Sigmoid colon (tissue), 7 donors: ENCODE measurements at regions of chr20 and their contacts with region 1.

Region 1: DNA sequence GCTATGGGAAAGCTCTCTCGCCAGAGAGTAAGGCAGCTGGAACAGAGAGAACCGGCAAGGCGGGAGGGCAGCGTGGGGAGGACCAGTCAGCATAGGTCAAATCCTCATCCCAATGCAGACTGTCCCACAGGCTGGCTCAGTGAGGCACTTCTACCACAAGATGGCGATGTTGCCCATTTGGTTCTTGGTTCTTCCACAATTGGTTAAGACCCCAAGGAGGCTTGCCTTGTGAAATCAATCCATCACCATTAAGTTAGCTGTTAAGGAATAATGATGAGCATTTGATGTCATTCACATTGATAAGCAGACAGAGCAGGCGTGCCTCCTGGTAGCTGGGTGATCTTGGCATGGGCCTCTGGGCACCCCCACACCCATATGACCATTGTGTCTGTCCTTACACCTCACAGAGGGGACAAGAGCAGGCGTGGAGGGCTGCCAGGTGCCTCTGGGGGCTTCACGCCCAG is 2.4 kb downstream of the CSTL1 start:
- DNase-seq: peak; percentile 81
- H3K4me3 ChIP-seq: no peak overlapping the region
- H3K27ac ChIP-seq: no peak overlapping the region
- H3K4me1 ChIP-seq: peaks cover 0 to 35% (median 4%) of the 10 kb centered on the region in 4 donors
- H3K27me3 ChIP-seq: no peaks in the 10 kb centered on the region
- CTCF ChIP-seq: peak; percentile 60 to 84 (median 70)
- EP300 ChIP-seq: no peak
- POLR2A ChIP-seq: no peak

Region 2: DNA sequence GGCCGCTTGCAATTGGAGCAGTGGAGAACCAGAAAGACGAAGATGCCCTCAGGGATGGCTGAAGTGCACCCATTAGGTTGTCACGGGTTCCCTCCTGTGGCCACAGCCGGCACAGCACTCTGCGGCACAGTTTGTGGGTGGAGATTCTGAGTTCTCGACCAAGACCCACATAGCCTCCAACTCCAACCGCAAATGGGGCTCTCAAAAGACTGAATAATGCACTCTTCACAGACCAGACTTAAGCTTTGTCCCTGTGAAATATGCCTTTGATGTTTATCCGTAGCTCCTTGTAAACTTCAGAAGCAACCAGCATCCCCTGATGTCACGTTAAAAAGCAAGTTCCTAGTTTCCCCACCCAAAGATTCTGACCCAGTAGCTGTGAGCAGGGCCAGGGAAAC is 164.8 kb after region 1 on chr20:
- intact Hi-C with region 1: loop called (anchors 2 kb)
- DNase-seq: peak; percentile 89
- H3K4me3 ChIP-seq: no peak overlapping the region
- H3K27ac ChIP-seq: peak overlapping the region in 1 of 4 donors; percentile 11
- H3K4me1 ChIP-seq: peaks cover 0 to 14% (median 3%) of the 10 kb centered on the region in 4 donors
- H3K27me3 ChIP-seq: no peaks in the 10 kb centered on the region
- CTCF ChIP-seq: peak; percentile 65 to 95 (median 84)
- EP300 ChIP-seq: no peak
- POLR2A ChIP-seq: no peak